Posterior vena cava (tissue), 2 donors: ENCODE measurements at regions of chr5 and their contacts with region 1.

Region 1: DNA sequence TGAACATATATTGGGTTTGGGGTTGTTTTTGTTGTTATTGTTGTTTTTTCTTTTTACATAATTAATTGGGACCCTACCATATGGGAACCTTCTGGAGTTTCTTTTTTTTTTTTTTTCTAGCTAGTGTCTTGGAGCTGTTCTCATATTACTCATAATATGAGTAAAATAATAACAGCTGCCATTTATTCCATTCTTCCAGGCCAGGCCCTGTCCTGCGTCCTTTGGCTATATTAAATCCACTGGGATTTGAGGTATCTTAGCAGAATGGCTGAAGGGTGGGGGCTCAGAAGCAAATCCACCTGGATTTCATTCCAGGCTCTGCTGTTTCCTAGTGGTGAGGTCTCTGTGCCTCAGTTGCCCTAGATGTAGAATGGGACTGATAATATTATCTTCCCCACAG is 47.2 kb upstream of the RPL26L1 start:
- DNase-seq: no peak

Region 2: DNA sequence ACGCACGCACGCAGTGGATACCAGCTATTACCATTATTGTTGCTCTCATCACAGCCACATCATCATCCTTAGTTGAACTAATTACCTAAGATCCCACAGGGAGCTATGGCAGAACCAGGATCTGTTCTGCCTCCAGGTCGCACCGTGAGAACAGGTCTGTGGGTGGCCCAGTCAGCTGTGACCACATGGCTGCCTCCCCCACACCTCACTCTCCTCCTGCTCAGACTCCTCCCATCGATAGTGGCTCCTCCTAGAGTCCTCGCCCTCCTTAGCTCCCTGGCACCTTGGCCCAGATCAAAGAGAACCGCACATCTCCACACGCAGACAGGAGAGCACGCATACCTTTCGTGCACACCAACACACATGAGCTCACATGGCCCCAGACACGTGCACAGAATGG is 14.8 kb after region 1 on chr5:
- intact Hi-C with region 1: loop called in 1 of 2 experiments (anchors 1 kb)
- DNase-seq: no peak